ENCODE measurements at regions of chr14 and their contacts with region 1.

Region 1: GRCh38 chr14:30725763-30726162 is 103.6 kb downstream of the SCFD1 start:
- DNase-seq: no peak
- H3K4me3 ChIP-seq: no peak overlapping the region
- H3K4me3 Mint-ChIP-seq: no peak overlapping the region
- H3K27ac Mint-ChIP-seq: no peak overlapping the region
- H3K4me1 ChIP-seq: no peaks in the 10 kb centered on the region
- H3K4me1 Mint-ChIP-seq: no peaks in the 10 kb centered on the region
- H3K27me3 ChIP-seq: no peaks in the 10 kb centered on the region
- H3K27me3 Mint-ChIP-seq: no peaks in the 10 kb centered on the region
- CTCF ChIP-seq: no peak

Region 2: DNA sequence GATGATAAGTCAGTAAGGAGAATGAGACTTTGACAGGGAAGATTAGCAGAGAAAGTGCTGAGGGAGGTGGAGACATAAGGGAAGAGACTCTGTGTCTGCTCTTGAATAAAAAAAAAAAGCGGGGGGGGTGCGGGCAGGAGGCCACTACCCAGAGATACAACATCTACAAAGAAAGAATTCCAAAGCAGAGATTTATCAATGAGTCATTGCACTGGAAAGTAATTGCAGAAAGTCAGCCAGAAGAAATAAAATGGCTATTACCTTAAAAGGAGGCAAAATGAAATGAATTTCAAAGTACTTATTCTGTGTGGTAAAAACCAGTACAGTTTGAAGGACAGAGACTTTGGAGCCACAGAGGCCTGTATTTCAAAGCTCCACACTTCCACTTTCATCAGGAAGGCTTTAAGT is 531.0 kb before region 1 on chr14:
- CTCF ChIA-PET with region 1: no interaction called
- POLR2A ChIA-PET with region 1: no interaction called
- intact Hi-C with region 1: no loop called
- DNase-seq: no peak
- H3K4me3 ChIP-seq: no peak overlapping the region
- H3K4me3 Mint-ChIP-seq: no peak overlapping the region
- H3K27ac Mint-ChIP-seq: no peak overlapping the region
- H3K4me1 ChIP-seq: no peaks in the 10 kb centered on the region
- H3K4me1 Mint-ChIP-seq: no peaks in the 10 kb centered on the region
- H3K27me3 ChIP-seq: no peaks in the 10 kb centered on the region
- H3K27me3 Mint-ChIP-seq: peaks cover 6% of the 10 kb centered on the region
- CTCF ChIP-seq: no peak

Region 3: GRCh38 chr14:30706704-30707103 is 19.1 kb before region 1 on chr14:
- CTCF ChIA-PET with region 1: no interaction called
- POLR2A ChIA-PET with region 1: no interaction called
- intact Hi-C with region 1: no loop called
- DNase-seq: no peak
- H3K4me3 ChIP-seq: no peak overlapping the region
- H3K4me3 Mint-ChIP-seq: no peak overlapping the region
- H3K27ac Mint-ChIP-seq: no peak overlapping the region
- H3K4me1 ChIP-seq: no peaks in the 10 kb centered on the region
- H3K4me1 Mint-ChIP-seq: no peaks in the 10 kb centered on the region
- H3K27me3 ChIP-seq: no peaks in the 10 kb centered on the region
- H3K27me3 Mint-ChIP-seq: no peaks in the 10 kb centered on the region
- CTCF ChIP-seq: no peak

Region 4: DNA sequence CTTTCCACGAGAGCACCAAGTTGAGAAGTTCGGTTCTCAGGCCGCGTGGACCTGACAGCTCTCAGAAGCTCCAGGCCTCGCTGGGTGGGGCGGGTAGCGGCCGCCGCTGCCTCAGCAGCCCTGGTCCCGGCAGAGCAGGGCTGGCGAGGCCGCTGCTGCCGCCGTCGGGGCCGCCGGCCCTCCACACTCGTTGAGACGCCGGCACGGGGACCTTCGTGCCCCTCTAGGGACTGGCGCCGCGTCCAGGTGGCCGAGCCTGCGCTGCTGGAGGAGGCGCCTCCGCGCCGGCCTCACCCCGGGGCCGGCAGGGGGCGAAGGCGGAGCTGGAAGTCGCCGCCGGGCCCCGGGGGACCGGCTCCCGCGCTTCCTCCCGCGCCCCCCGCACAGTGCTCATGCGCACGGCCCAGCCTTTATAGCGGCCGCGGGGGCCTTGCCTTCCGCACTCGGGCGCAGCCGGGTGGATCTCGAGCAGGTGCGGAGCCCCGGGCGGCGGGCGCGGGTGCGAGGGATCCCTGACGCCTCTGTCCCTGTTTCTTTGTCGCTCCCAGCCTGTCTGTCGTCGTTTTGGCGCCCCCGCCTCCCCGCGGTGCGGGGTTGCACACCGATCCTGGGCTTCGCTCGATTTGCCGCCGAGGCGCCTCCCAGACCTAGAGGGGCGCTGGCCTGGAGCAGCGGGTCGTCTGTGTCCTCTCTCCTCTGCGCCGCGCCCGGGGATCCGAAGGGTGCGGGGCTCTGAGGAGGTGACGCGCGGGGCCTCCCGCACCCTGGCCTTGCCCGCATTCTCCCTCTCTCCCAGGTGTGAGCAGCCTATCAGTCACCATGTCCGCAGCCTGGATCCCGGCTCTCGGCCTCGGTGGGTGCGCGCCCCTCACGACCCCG is 148.6 kb after region 1 on chr14 and contains the start of gene COCH:
- CTCF ChIA-PET with region 1: no interaction called
- POLR2A ChIA-PET with region 1: no interaction called
- intact Hi-C with region 1: loop called (anchors 5 kb)
- DNase-seq: peak; percentile 69 to 82
- H3K4me3 ChIP-seq: peak within 1 kb of the TSS; percentile 90
- H3K4me3 Mint-ChIP-seq: peak within 1 kb of the TSS; percentile 89
- H3K27ac Mint-ChIP-seq: no peak within 1 kb of the TSS
- H3K4me1 ChIP-seq: no peaks in the 10 kb centered on the region
- H3K4me1 Mint-ChIP-seq: no peaks in the 10 kb centered on the region
- H3K27me3 ChIP-seq: no peaks in the 10 kb centered on the region
- H3K27me3 Mint-ChIP-seq: no peaks in the 10 kb centered on the region
- CTCF ChIP-seq: peak; percentile 33 to 59
- total RNA-seq, gene COCH: 32.2 and 33.4 TPM in 2 replicates

Region 5: DNA sequence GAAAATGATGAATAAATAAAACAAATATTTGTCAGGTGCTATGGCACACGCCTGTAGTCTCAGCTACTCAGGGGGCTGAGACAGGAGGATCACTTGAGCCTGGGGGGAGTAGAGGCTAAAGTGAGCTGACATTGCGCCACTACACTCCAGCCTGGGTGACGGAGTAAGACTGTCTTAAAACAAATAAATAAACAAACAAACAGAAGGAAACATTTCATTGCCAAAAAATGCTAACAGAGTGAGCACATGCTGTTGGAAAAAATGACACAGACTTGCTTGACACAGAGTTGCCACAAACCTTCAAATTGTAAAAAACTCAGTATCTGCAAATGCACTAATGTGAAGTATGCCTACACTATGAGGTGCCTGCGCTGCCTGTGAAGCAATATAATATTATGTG is 248.9 kb after region 1 on chr14:
- CTCF ChIA-PET with region 1: no interaction called
- POLR2A ChIA-PET with region 1: no interaction called
- intact Hi-C with region 1: no loop called
- DNase-seq: no peak
- H3K4me3 ChIP-seq: no peak overlapping the region
- H3K4me3 Mint-ChIP-seq: no peak overlapping the region
- H3K27ac Mint-ChIP-seq: no peak overlapping the region
- H3K4me1 ChIP-seq: no peaks in the 10 kb centered on the region
- H3K4me1 Mint-ChIP-seq: peaks cover 6% of the 10 kb centered on the region
- H3K27me3 ChIP-seq: no peaks in the 10 kb centered on the region
- H3K27me3 Mint-ChIP-seq: no peaks in the 10 kb centered on the region
- CTCF ChIP-seq: no peak

Measured in Caco-2 (cell line).